AG04450 (cell line): ENCODE measurements at regions of chr1 and their contacts with region 1.

Region 1: GRCh38 chr1:113677250-113678158 is 81.8 kb downstream of the PHTF1 start:
- DNase-seq: peak; percentile 20
- H3K4me3 ChIP-seq: no peak overlapping the region
- H3K27ac ChIP-seq: no peak overlapping the region
- H3K27me3 ChIP-seq: no peaks in the 10 kb centered on the region
- CTCF ChIP-seq: peak; percentile 59

Region 2: DNA sequence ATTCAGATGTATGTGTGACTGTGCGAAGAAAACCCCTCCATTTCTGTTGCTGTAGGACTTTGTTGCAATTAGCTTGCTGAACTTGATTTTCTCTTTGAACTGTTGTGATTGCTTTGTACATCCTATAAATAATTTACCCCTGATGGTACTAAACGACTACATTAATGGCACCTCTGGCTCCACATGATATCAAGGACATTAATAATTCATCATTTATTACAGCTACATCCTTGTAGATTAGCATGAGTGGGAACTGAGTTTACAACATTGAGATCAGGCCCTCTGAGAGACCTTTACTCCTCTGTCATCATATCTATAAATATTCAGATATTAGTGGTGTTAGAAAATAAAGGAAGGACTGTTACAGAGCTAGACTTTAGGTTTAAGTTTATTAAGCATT is 591.0 kb before region 1 on chr1:
- CTCF ChIA-PET with region 1: no interaction called
- POLR2A ChIA-PET with region 1: no interaction called
- DNase-seq: no peak
- H3K4me3 ChIP-seq: no peak overlapping the region
- H3K27ac ChIP-seq: no peak overlapping the region
- H3K27me3 ChIP-seq: no peaks in the 10 kb centered on the region
- CTCF ChIP-seq: no peak

Region 3: DNA sequence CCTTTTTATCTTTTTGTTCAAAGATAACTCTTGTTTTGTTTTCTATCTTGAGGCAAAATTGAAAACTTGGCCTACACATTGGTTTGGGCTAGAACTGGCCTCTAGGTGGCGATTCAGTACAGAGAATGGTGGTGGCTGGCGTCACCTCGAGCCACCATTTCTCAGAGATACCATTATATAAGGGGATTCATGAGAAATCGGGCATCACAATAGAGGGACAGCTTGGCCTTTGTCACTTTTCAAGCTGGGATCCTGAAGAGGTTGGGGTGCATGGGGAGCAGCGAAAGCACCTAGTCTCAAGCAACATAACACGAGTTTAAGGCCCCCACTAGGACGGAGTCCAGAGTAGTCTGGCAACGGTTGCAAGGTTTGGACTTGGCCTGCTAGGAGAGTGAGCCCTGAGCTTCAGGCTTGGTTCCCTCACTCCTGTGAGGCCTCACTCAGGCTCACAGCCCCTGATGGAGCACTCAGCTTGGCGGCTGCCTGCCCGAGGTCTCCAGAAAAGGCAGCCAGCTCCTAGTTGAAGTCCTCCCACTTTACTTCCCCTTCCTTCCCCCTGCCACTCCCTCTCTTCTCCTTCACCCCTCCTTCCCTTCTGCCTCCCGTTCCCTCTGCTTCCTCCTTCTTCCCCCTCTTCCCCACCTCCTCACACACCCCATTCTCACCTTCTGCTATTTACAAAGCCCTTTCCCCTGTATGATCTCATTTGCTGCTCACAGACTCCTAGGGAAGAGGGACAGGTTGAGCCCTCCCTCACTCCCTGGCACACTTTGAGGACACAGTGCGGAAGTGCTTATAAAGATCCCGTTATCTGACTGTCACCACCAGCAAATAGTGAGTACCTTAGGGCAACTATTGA is 536.7 kb before region 1 on chr1:
- CTCF ChIA-PET with region 1: interaction called, 56 read pairs
- POLR2A ChIA-PET with region 1: no interaction called
- DNase-seq: peak; percentile 21
- H3K4me3 ChIP-seq: no peak overlapping the region
- H3K27ac ChIP-seq: peak overlapping the region; percentile 22
- H3K27me3 ChIP-seq: no peaks in the 10 kb centered on the region
- CTCF ChIP-seq: peak; percentile 85